ENCODE measurements at regions of chr11 and their contacts with region 1.

Region 1: GRCh38 chr11:8813658-8814057 is 97.3 kb upstream of the AKIP1 start:
- DNase-seq: peak; percentile 28 to 77 (median 63)
- H3K4me3 ChIP-seq: no peak overlapping the region
- H3K27ac ChIP-seq: peak overlapping the region in 17 of 59 donors; percentile 3 to 70 (median 34)
- H3K27me3 ChIP-seq: no peaks in the 10 kb centered on the region
- CTCF ChIP-seq: peak; percentile 49 to 93 (median 80)

Region 2: GRCh38 chr11:8699903-8700302 is 113.8 kb before region 1 on chr11:
- intact Hi-C with region 1: loop called in 1 of 2 experiments (anchors 5 kb)
- DNase-seq: peak in 9 of 10 donors; percentile 43 to 83 (median 74)
- H3K4me3 ChIP-seq: no peak overlapping the region
- H3K27ac ChIP-seq: peak overlapping the region; percentile 26 to 99 (median 91)
- H3K27me3 ChIP-seq: no peaks in the 10 kb centered on the region
- CTCF ChIP-seq: no peak

Region 3: GRCh38 chr11:8768625-8769333 is 44.9 kb before region 1 on chr11:
- intact Hi-C with region 1: no loop called
- DNase-seq: no peak
- H3K4me3 ChIP-seq: no peak overlapping the region
- H3K27ac ChIP-seq: peak overlapping the region in 2 of 59 donors; percentile 24 to 61
- H3K27me3 ChIP-seq: no peaks in the 10 kb centered on the region
- CTCF ChIP-seq: no peak

Region 4: GRCh38 chr11:8870411-8871170 is 56.9 kb after region 1 on chr11:
- intact Hi-C with region 1: no loop called
- DNase-seq: peak in 9 of 10 donors; percentile 43 to 71 (median 53)
- H3K4me3 ChIP-seq: peak overlapping the region; percentile 60 to 94 (median 81)
- H3K27ac ChIP-seq: peak overlapping the region in 55 of 59 donors; percentile 21 to 88 (median 71)
- H3K27me3 ChIP-seq: no peaks in the 10 kb centered on the region
- CTCF ChIP-seq: peak in 1 of 56 donors; percentile 2

Region 5: DNA sequence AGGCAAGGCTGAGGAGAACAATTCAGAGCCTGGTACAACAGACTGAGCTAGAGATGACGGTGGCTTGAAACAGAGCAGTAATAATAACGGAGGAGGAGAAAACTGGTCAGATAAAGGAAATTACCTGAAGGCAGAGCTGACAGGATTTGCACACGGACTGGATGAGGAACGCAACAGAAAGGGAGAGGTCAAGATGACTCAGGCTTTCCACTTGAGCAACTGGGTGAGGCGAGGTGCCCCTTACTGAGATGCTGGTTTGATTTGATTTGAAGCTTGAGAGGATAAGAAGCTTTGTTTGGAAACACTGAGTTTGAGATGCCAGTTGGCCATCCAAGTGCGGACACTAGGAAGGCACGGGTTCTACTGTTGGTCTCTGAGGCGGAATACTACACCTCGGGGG is 225.5 kb after region 1 on chr11:
- intact Hi-C with region 1: no loop called
- DNase-seq: no peak
- H3K4me3 ChIP-seq: no peak overlapping the region
- H3K27ac ChIP-seq: peak overlapping the region in 2 of 59 donors; percentile 37 to 47
- H3K27me3 ChIP-seq: no peaks in the 10 kb centered on the region
- CTCF ChIP-seq: no peak

Measured in dorsolateral prefrontal cortex (tissue), 120 donors.